Activated CD4-positive, alpha-beta T cell treated with anti-CD3 and anti-CD28 coated beads for 36 hours (primary cell): ENCODE measurements at regions of chrX and their contacts with region 1.

Region 1: GRCh38 chrX:77776659-77777058 is 9.4 kb downstream of the ATRX start:
- DNase-seq: no peak
- ATAC-seq: no peak
- H3K4me3 Mint-ChIP-seq: no peak overlapping the region
- H3K27ac Mint-ChIP-seq: no peak overlapping the region
- H3K4me1 Mint-ChIP-seq: peaks cover 28% of the 10 kb centered on the region
- H3K27me3 Mint-ChIP-seq: no peaks in the 10 kb centered on the region

Region 2: GRCh38 chrX:77453190-77453589 is 323.5 kb before region 1 on chrX:
- CTCF ChIA-PET with region 1: no interaction called
- POLR2A ChIA-PET with region 1: no interaction called
- intact Hi-C with region 1: no loop called
- DNase-seq: no peak
- ATAC-seq: no peak
- H3K4me3 Mint-ChIP-seq: no peak overlapping the region
- H3K27ac Mint-ChIP-seq: no peak overlapping the region
- H3K4me1 Mint-ChIP-seq: peaks cover 2% of the 10 kb centered on the region
- H3K27me3 Mint-ChIP-seq: peaks cover 5% of the 10 kb centered on the region

Region 3: DNA sequence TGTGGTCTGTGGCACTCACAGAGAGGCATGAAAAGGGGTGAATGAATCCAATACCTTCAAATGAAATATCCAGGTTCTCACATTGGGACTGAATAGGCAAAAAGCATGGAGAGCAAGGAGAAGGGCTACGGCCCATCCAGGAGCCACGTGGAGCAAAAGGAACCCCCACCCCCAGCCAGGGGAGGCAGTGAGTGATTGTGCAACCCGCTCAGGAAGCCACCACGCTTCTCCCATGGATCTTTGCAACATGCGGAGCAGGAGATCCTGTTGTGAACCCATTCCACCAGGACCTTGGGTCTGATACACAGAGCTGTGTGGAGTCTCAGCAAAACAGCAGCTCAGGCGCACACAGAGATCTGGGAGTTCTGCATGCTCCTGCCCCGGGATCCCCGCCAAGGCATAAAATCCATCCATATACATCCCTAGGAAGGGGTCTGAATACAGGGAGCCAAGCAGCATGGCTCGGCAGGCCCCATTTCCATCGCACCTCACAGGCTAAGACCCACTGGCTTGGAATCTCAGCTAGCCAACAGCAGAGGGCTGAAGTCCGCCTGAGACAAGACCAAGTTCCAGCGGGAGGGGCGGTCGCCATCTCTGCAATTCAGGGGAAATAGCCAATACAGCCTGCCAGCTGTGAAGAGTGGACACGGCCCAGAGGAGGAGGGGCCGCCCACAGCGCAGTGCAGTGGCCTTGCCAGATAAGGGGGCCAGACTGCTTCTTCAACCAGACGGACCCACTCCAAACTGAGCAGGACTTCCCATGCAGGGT is 249.2 kb before region 1 on chrX:
- CTCF ChIA-PET with region 1: no interaction called
- POLR2A ChIA-PET with region 1: no interaction called
- intact Hi-C with region 1: no loop called
- DNase-seq: no peak
- ATAC-seq: no peak
- H3K4me3 Mint-ChIP-seq: no peak overlapping the region
- H3K27ac Mint-ChIP-seq: peak overlapping the region; percentile 82
- H3K4me1 Mint-ChIP-seq: peaks cover 15% of the 10 kb centered on the region
- H3K27me3 Mint-ChIP-seq: no peaks in the 10 kb centered on the region

Region 4: DNA sequence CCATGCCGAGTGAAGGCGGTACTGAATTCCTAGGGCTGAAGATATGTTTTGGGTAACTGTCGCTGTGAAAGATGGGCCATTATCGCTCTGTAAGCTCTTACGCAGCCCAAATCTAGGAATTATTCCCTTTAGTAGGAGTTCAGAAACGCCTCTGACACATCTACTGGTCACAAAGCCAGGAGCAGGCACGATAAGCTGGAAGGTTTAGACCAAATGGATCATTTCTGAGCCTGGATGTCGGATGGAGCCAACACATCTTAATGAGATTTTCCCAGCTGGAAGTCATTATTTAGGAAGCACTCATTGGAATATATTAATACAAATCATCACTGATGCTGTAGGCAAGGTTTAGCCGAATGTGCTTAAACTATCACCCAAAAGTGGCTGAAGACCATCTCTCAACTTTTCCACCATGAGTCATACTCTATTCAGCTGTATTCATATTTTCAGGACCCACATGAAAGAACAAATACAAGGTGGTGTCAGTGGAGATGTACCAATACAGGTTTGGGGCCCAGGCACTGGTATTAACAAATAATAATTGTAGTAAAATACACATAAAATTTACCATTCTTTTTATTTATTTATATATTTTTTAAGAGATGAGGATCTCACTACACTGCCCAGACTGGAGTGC is 43.5 kb after region 1 on chrX:
- CTCF ChIA-PET with region 1: no interaction called
- POLR2A ChIA-PET with region 1: interaction called, 5 read pairs
- intact Hi-C with region 1: loop called in 1 of 2 experiments (anchors 10 kb)
- DNase-seq: no peak
- ATAC-seq: no peak
- H3K4me3 Mint-ChIP-seq: no peak overlapping the region
- H3K27ac Mint-ChIP-seq: no peak overlapping the region
- H3K4me1 Mint-ChIP-seq: peaks cover 7% of the 10 kb centered on the region
- H3K27me3 Mint-ChIP-seq: no peaks in the 10 kb centered on the region